Ovary (tissue), 10 donors: ENCODE measurements at regions of chr2 and their contacts with region 1.

Region 1: DNA sequence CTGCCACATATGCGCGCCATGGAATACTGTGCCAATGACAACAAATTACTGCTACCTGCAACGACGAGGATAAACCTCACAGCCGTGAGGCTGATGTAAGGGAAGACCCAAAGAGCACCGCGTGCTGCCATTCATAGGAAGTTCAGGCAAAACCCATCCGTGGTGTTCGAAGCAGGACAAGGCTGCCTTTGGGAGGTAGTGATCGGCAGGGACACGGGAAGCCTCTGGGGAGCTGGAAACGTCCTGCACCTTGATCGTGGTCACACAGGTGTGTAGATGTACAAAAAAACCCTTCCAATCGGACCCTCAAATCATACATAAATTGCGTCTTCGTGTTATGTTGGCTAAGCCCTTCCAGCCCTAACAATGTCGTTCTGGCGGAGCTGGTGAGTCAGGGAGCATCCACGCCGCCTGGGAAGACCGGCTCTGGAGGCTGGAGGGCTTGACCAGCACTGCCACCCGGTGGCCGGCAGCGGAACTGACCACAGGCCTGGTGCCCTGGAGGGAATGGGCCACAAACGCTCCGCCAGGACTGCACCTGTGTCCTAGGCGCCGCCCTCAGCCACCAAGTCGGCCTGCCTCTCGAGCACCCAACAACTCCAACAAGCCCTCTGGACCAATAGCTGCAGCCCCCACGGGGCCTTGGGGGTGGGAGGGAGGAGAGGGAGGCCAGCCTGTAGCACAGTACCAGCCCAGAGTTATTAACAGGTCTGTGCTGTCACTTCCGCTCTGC is 4.1 kb upstream of the NEURL3 start:
- DNase-seq: peak; percentile 79 to 90 (median 88)
- H3K4me3 ChIP-seq: no peak overlapping the region
- H3K27ac ChIP-seq: no peak overlapping the region
- H3K4me1 ChIP-seq: peaks cover 2% of the 10 kb centered on the region
- H3K27me3 ChIP-seq: no peaks in the 10 kb centered on the region
- CTCF ChIP-seq: peak; percentile 91 to 97 (median 91)
- EP300 ChIP-seq: no peak
- POLR2A ChIP-seq: no peak

Region 2: DNA sequence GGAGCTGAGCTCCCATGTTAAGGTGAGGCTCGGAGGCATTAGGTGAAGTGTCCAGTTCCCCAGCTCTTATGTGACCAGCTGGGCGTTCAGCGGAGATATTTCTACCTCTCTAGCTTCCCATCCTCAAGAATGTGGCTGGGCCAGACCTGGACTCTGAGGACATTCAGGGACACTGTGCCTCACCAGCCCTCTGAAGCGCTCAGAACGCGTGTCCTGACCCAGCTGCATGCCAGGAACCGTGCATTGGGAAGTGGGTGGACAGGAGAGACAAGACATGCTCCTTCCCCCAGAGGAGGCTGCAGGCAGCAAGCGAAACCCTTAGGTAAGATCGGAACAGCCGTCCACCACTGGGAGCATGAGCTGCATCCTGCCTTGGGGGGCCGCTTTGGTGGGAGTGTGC is 436.5 kb before region 1 on chr2:
- intact Hi-C with region 1: no loop called
- DNase-seq: no peak
- H3K4me3 ChIP-seq: no peak overlapping the region
- H3K27ac ChIP-seq: no peak overlapping the region
- H3K4me1 ChIP-seq: no peaks in the 10 kb centered on the region
- H3K27me3 ChIP-seq: no peaks in the 10 kb centered on the region
- CTCF ChIP-seq: no peak
- EP300 ChIP-seq: no peak
- POLR2A ChIP-seq: no peak

Region 3: DNA sequence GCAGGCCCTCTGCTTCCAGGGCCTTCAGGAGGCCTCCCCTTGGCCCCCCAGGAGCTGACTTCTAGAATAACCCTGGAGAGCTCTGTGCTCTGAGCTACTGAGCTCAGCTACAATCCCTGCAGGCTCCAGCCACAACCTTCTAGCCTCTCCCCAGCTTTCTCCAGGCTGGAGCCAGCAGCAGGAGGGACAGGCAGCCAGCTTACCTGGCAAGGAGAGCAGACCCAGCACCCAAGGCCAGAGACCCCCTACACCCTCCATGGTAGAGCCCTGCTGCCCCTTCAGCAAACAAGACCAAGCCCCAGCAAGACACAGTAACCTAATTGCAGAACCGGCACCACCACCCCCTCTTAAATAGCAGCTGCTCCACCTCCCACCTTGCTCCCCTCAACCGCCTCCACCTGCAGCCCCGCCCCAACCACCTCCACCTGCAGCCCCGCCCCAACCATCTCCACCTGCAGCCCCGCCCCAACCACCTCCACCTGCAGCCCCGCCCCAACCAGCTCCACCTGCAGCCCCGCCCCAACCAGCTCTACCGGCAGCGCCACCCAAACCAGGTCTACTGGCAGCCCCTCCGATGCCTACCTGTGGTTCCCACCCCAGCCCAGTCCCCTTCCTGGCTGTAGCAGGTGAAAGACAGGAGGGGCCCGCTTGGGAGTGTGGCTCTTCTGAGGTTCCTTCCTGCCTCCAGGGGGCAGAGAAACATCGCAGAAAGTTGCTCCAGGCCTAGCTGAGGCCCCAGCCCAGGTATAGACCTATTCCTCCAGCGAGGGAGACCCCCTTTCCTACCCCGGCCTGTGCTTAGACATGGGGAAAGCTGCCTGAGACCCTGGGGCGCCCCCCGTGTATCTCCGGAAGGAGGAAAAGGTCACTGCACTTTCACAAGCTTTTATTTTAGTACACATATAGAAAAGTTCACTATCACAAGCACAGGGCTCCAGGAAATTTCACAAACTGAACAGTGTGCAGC is 370.8 kb before region 1 on chr2 and contains the start of gene ASTL:
- intact Hi-C with region 1: loop called in 3 of 4 experiments (anchors 5 to 10 kb)
- DNase-seq: peak in 1 of 5 donors; percentile 41
- H3K4me3 ChIP-seq: no peak within 1 kb of the TSS
- H3K27ac ChIP-seq: no peak within 1 kb of the TSS
- H3K4me1 ChIP-seq: no peaks in the 10 kb centered on the region
- H3K27me3 ChIP-seq: no peaks in the 10 kb centered on the region
- CTCF ChIP-seq: peak in 1 of 3 donors; percentile 12
- EP300 ChIP-seq: no peak
- POLR2A ChIP-seq: no peak
- total RNA-seq, gene ASTL: 0.15 to 1.7 (median 0.56) TPM in 4 of 7 donors, not detected in the others

Region 4: GRCh38 chr2:96305091-96305978 is 203.9 kb before region 1 on chr2 and contains the start of gene SNRNP200:
- intact Hi-C with region 1: loop called in 1 of 4 experiments (anchors 2 kb)
- DNase-seq: peak; percentile 81 to 91 (median 85)
- H3K4me3 ChIP-seq: peak within 1 kb of the TSS; percentile 71
- H3K27ac ChIP-seq: peak within 1 kb of the TSS in 1 of 2 donors; percentile 70
- H3K4me1 ChIP-seq: peaks cover 8% of the 10 kb centered on the region
- H3K27me3 ChIP-seq: no peaks in the 10 kb centered on the region
- CTCF ChIP-seq: peak in 1 of 3 donors; percentile 6
- EP300 ChIP-seq: no peak
- POLR2A ChIP-seq: peak; percentile 82
- total RNA-seq, gene SNRNP200: 71.1 to 149 (median 125) TPM

Region 5: GRCh38 chr2:96407041-96407918 is 102.0 kb before region 1 on chr2:
- intact Hi-C with region 1: loop called in 3 of 4 experiments (anchors 5 kb)
- DNase-seq: peak; percentile 24 to 60 (median 45)
- H3K4me3 ChIP-seq: no peak overlapping the region
- H3K27ac ChIP-seq: no peak overlapping the region
- H3K4me1 ChIP-seq: peaks cover 13% of the 10 kb centered on the region
- H3K27me3 ChIP-seq: no peaks in the 10 kb centered on the region
- CTCF ChIP-seq: peak; percentile 35 to 54 (median 51)
- EP300 ChIP-seq: no peak
- POLR2A ChIP-seq: no peak